Activated CD4-positive, alpha-beta memory T cell treated with anti-CD3 and anti-CD28 coated beads for 36 hours (primary cell): ENCODE measurements at regions of chr20 and their contacts with region 1.

Region 1: DNA sequence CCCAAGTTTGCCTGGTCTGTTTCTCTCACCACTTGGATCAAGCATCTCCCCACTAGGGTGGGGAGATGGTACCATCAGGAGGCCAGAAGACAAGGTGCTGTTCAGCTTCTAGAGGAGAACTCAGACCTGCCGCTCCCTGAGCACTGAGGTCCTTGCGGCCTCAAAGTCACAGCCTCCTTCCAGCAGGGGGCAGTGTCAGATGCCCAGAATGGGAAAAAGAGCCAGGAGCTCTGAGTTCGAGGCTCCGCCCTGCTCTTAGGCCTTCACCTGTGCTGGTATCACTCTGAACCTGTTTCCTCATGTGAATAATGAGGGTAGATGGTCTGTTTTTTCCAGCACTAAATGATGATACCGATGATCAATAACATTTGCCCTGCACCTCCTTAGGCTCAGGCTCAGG is 68.7 kb downstream of the TOX2 start:
- DNase-seq: peak; percentile 68
- H3K4me3 Mint-ChIP-seq: no peak overlapping the region
- H3K27ac Mint-ChIP-seq: no peak overlapping the region
- H3K4me1 Mint-ChIP-seq: peaks cover 14% of the 10 kb centered on the region
- H3K27me3 Mint-ChIP-seq: peaks cover 2% of the 10 kb centered on the region

Region 2: DNA sequence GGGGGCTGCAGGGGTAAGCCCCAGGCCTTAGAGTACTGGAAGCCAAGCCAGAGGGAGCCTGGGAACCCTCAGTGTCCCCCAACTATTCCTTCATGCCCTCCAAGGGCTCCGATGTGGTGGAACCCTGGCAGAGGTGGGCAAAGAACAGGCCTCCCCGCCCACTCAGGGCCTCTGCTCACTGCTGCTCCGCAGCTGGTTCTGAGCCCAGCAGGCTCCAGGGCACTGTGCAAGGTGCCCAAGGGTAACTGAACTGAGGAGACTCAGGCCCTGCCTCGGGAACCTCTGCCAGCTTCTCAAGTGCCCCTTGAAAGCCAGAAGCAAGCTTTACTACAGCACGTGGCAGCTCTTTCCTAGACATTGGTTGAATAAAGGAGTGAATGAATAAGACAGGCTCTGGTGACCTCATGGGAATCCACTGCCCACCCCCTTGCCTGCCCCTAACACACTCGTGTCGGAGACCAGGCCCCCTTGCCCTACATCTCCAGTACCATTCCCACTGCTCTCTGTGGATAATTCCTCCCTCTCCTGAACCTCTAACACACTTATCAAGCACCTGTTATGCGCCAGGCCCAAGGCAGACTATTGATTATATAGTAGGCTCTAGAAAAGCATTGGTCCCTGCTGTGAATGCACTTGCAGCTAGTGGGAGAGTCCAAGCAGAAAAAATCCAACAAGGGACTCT is 13.7 kb before region 1 on chr20:
- CTCF ChIA-PET with region 1: interaction called, 14 read pairs
- POLR2A ChIA-PET with region 1: no interaction called
- intact Hi-C with region 1: no loop called
- DNase-seq: no peak
- H3K4me3 Mint-ChIP-seq: no peak overlapping the region
- H3K27ac Mint-ChIP-seq: no peak overlapping the region
- H3K4me1 Mint-ChIP-seq: peaks cover 10% of the 10 kb centered on the region
- H3K27me3 Mint-ChIP-seq: no peaks in the 10 kb centered on the region

Region 3: GRCh38 chr20:44069203-44070011 is 86.0 kb after region 1 on chr20:
- CTCF ChIA-PET with region 1: interaction called, 6 read pairs
- POLR2A ChIA-PET with region 1: no interaction called
- intact Hi-C with region 1: loop called (anchors 5 kb)
- DNase-seq: peak; percentile 74
- H3K4me3 Mint-ChIP-seq: peak overlapping the region; percentile 65
- H3K27ac Mint-ChIP-seq: peak overlapping the region; percentile 84
- H3K4me1 Mint-ChIP-seq: peaks cover 50% of the 10 kb centered on the region
- H3K27me3 Mint-ChIP-seq: no peaks in the 10 kb centered on the region